ENCODE measurements at regions of chr20 and their contacts with region 1.

Region 1: DNA sequence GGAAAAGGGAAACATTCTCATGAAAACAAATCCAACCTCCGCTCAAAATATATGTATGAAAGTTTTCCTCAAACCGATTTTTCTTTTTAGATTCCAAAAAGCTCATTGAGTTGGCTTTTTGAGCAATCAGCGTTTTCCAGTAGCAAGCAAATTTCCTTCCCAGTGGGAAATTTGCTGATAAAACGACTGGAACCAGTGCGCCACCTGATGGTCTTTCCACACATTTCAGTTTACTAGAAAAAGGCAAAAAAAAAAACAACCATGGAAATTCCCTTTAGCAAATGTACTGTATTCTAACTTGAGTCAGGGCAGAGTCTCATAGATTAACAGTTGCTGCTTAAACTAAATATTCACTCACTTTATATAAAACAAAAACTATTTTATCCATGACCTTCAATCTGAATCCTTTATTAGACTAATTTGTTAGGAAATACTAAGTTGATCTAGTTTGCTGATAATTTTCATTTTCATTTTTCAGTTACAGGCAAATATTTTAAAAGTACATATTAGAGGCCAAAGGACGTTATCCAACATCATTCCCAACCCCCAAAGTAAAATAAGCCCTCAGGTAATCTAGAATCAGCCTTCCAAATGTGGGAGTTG is 271.5 kb downstream of the FOXA2 start:
- DNase-seq: peak; percentile 62
- H3K4me3 Mint-ChIP-seq: no peak overlapping the region
- H3K27ac Mint-ChIP-seq: no peak overlapping the region
- H3K4me1 Mint-ChIP-seq: peaks cover 2% of the 10 kb centered on the region
- H3K27me3 Mint-ChIP-seq: no peaks in the 10 kb centered on the region
- CTCF ChIP-seq: peak; percentile 73

Region 2: DNA sequence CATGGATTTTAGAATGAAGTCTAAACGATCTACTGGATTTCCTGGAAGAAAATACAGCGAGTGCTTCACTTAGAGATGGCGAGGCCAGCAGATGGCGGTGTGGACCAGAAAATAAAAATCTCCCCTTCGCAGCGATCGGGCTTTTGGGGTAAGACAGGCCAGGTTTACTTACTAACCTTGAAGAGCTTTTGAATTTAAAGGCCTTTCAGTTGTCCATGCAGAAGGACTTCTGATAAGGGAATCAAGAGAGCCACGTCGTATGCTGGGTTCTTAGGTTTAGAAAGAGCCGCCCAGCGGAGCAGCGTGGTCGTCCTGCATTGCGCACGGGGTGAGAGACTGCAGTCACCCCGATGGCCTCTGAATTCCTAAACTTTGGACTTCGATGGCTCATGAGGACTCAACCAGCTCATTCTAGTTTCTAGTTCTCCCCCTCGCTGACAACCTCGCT is 1475.2 kb before region 1 on chr20:
- CTCF ChIA-PET with region 1: no interaction called
- POLR2A ChIA-PET with region 1: no interaction called
- intact Hi-C with region 1: loop called (anchors 10 kb)
- DNase-seq: peak; percentile 50
- H3K4me3 Mint-ChIP-seq: no peak overlapping the region
- H3K27ac Mint-ChIP-seq: no peak overlapping the region
- H3K4me1 Mint-ChIP-seq: no peaks in the 10 kb centered on the region
- H3K27me3 Mint-ChIP-seq: peaks cover 17% of the 10 kb centered on the region
- CTCF ChIP-seq: peak; percentile 79

Region 3: DNA sequence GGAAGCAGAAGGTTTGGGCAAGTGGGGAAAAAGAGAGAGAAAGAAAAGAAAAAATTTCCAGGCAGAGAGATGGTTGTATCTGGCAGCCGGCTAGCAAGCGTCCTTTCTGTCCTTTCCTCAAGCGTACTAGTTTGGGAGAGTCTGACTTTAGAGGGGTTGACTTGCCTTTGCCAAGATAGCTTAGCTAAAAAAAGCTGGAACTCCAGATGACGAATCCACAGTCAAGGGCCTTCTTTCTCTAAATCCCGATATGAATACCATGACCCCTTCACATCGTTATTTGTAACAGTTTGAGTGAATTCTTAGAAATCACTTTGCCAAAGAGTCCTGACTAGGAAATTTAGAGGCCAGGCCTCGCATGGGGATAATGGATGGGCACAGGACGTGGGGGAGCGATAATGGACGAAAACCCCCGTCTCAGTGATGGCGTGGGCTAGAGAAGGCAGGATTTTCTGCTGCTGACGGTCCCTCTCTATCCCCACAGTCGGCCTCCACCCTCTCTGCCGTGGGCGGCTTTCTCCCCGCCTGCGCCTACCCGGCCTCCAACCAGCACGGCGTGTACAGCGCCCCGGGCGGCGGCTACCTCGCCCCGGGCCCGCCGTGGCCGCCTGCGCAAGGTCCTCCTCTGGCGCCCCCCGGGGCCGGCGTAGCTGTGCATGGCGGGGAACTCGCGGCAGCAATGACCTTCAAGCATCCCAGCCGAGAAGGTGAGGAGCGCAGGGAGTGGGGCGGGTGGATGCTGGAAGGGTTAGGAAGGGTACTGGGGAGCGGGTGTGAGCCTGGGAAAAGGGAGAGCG is 603.9 kb before region 1 on chr20:
- CTCF ChIA-PET with region 1: interaction called, 10 read pairs
- POLR2A ChIA-PET with region 1: no interaction called
- intact Hi-C with region 1: no loop called
- DNase-seq: no peak
- H3K4me3 Mint-ChIP-seq: no peak overlapping the region
- H3K27ac Mint-ChIP-seq: no peak overlapping the region
- H3K4me1 Mint-ChIP-seq: no peaks in the 10 kb centered on the region
- H3K27me3 Mint-ChIP-seq: peaks cover 86% of the 10 kb centered on the region
- CTCF ChIP-seq: no peak

Region 4: GRCh38 chr20:21808863-21809664 is 503.8 kb before region 1 on chr20:
- CTCF ChIA-PET with region 1: interaction called, 5 read pairs
- POLR2A ChIA-PET with region 1: no interaction called
- intact Hi-C with region 1: loop called (anchors 5 kb)
- DNase-seq: no peak
- H3K4me3 Mint-ChIP-seq: no peak overlapping the region
- H3K27ac Mint-ChIP-seq: no peak overlapping the region
- H3K4me1 Mint-ChIP-seq: no peaks in the 10 kb centered on the region
- H3K27me3 Mint-ChIP-seq: peaks cover 39% of the 10 kb centered on the region
- CTCF ChIP-seq: peak; percentile 78

Region 5: DNA sequence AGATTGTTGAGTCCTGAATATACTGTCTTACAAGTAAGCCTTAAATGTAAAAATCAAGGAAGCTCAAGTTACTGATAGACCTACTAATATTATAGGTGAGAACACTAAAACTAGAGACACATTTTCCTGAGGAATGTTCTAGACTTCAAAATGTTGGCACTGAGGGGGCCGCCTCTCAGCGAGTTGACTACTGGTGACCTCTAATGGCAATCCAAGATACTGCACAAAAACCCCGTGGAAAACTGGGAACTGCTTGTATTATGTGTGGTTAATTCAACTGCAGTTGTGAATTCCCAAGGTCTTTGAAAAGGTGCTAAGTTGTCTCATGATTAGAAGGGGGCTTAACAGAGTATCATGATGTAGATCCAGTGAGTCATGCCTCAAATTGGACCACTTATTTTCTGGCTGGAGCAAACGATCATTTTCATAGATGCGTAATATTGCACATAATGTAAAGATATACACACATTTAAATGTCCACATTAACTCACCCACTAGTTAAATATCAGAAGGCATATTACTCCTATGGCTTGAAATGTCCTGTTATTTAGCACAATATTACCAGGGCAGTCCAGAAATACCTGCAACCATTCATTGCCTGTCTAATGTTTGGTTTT is 64.7 kb before region 1 on chr20:
- CTCF ChIA-PET with region 1: interaction called, 4 read pairs
- POLR2A ChIA-PET with region 1: no interaction called
- intact Hi-C with region 1: loop called (anchors 5 kb)
- DNase-seq: peak; percentile 38
- H3K4me3 Mint-ChIP-seq: no peak overlapping the region
- H3K27ac Mint-ChIP-seq: no peak overlapping the region
- H3K4me1 Mint-ChIP-seq: no peaks in the 10 kb centered on the region
- H3K27me3 Mint-ChIP-seq: peaks cover 11% of the 10 kb centered on the region
- CTCF ChIP-seq: peak; percentile 52

Region 6: DNA sequence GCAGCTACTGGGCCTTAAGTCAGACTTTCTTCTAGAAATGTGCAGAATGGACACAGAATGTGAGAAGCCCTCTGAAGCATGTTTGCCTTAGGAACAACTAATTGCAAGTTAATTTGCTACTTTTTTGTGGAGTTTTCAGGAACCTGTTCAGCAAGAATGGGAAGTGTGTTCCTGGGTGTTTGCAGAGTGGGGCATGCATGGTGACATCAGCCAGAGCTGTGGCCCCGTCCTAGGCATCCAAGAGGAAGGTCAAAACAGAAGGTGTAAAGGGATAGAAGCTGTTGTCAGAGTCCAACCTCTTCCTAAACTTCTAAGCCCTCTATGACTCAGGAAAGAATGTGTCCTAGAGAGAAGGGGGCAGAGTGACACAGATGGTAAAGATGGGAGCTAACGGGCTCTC is 16.8 kb before region 1 on chr20:
- CTCF ChIA-PET with region 1: interaction called, 22 read pairs
- POLR2A ChIA-PET with region 1: interaction called, 4 read pairs
- intact Hi-C with region 1: no loop called
- DNase-seq: no peak
- H3K4me3 Mint-ChIP-seq: no peak overlapping the region
- H3K27ac Mint-ChIP-seq: no peak overlapping the region
- H3K4me1 Mint-ChIP-seq: peaks cover 6% of the 10 kb centered on the region
- H3K27me3 Mint-ChIP-seq: no peaks in the 10 kb centered on the region
- CTCF ChIP-seq: no peak